ENCODE measurements at regions of chr3 and their contacts with region 1.

Region 1: GRCh38 chr3:39086144-39086543 is 21.3 kb downstream of the GORASP1 start:
- DNase-seq: no peak
- H3K4me3 ChIP-seq: no peak overlapping the region
- CTCF ChIP-seq: no peak

Region 2: DNA sequence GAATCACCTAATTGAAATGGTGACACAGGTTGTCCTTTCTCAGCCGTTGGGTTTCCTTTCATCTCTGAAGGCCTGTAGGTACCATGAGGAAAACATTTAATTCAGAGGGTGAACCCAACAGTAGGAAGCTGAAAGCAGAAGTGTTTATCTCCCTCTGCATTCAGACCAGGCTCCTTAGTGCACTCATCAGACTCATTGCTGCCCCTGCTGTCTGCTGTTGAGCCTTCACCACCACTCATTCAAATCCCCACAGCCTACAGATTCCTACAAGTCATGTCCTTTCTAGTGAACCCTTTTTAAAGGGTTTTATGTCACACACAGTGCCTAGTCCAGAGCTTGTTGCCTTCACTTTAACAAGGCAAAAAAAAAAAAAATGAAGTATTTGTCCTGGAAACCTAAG is 20.9 kb before region 1 on chr3:
- CTCF ChIA-PET with region 1: interaction called, 14 read pairs
- POLR2A ChIA-PET with region 1: interaction called, 4 read pairs
- DNase-seq: no peak
- H3K4me3 ChIP-seq: no peak overlapping the region
- CTCF ChIP-seq: peak; percentile 61

Region 3: DNA sequence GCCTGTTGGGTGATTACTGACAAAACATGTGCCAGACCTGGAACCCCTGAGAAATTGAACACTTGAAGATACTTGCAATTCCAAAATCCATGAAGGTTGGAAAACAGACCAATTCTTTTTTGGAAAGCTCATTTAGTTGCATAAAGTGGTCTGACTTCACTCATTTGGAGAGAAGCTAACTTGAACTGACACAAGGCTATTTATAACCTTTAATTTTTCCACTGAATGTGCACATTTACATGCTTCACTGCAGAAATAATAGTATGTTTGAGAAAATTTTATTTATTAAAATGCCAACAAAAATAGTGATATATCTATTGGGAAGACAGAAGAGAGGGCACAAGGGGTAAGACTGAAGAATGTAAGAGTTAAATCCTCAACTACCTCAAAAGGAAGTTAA is 473.4 kb after region 1 on chr3:
- CTCF ChIA-PET with region 1: no interaction called
- POLR2A ChIA-PET with region 1: no interaction called
- DNase-seq: no peak
- H3K4me3 ChIP-seq: no peak overlapping the region
- CTCF ChIP-seq: no peak

Measured in AG04449 (cell line).